ENCODE measurements at regions of chr3 and their contacts with region 1.

Region 1: DNA sequence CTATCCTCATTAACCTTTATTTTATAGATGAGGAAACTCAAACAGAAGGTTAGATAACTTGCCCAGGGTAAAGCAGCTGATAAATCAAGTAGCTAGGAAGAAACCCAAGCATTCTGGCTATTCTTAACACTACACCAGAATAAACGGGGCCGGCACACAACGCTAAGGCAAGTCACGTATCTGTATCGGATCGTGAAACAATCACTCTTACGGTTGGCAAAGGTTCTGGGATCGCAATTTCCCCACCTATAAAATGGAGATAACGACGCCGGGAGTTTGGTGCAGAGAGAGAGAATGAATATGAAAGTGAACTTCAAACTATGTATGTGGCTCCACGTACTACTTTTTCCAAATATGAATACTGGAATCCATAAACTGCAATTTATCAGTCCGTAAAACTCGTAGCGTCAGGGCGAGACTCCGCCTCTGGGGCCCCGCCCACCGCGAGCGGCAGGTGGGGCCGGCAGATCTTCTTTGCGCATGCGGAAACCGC is 252 bp upstream of the ARMC8 start:
- DNase-seq: peak; percentile 91
- H3K4me3 Mint-ChIP-seq: peak overlapping the region; percentile 95
- H3K27ac Mint-ChIP-seq: peak overlapping the region; percentile 92
- H3K4me1 Mint-ChIP-seq: peaks cover 27% of the 10 kb centered on the region
- H3K27me3 Mint-ChIP-seq: peaks cover 1% of the 10 kb centered on the region

Region 2: DNA sequence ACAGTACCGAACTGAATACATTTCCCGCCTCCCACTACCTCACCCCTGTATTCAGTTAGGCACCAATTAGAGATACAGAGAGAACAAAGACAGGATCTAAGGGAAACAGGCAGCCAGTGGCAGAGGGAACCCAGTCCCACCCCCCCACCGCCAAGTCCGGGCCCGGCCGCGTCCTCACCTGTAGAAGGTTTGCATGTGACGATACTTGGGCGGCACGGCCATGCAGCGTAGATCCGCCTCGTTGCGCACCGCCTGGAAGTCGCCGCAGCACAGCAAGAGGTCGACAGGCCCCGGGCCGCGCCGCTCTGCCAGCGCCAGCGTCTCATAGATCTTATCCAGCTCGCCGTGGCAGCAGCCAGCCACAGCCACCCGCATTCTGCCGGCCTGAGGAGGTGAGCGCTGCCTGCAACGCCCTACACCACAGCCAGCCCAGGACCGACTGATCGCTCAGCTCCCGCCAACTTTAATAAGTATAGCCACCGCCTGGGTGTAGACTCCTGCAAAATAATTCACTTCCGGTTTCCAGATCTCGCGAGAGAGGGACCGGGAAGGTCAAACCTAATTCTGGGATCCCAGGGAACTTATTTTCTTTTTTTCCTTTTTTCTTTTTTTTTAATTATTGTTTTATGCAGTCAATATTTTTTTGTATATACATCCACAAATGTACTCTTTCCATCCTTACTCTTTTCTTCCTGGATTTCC is 12.3 kb before region 1 on chr3 and contains the start of gene DBR1:
- CTCF ChIA-PET with region 1: interaction called, 12 read pairs
- intact Hi-C with region 1: loop called (anchors 1 kb)
- DNase-seq: peak; percentile 89
- H3K4me3 Mint-ChIP-seq: peak within 1 kb of the TSS; percentile 97
- H3K27ac Mint-ChIP-seq: peak within 1 kb of the TSS; percentile 97
- H3K4me1 Mint-ChIP-seq: peaks cover 37% of the 10 kb centered on the region
- H3K27me3 Mint-ChIP-seq: no peaks in the 10 kb centered on the region
- total RNA-seq, gene DBR1: 20.0 to 22.3 TPM

Region 3: DNA sequence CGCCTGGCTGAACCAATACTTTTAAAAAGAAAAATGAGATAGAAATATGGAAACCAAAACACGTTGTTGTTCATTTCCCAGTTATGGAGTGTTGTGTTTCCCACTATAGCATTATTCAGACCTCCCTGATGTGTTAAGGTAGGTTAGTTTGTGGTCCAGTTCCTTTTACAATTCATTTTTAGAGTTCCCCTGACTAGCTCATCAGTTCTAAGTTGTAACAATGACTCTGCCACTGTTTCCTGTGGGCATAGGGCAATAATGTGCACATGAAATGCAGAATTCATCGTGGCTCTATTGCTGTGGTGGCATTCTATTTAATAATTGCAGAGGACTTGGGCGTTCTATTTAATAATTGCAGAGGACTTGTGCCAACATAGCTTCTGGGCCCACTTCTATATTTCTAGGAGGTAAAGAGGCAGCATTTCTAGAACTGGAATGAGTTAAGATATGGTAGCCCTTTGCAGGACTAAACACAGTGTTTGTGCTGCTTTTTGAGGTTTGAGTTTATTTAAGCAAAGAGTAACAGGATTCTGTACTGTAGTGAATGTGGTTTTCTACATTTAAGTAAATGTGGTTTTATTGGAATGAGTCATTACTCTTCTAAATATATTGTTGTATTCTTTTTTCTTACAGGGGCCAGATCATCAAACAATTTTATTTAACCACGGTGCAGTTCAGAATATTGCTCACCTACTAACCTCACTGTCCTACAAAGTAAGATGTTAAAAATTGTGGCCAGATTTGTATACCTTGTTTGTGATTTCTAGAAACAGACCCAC is 47.7 kb after region 1 on chr3:
- CTCF ChIA-PET with region 1: no interaction called
- intact Hi-C with region 1: loop called (anchors 2 kb)
- DNase-seq: no peak
- H3K4me3 Mint-ChIP-seq: no peak overlapping the region
- H3K27ac Mint-ChIP-seq: no peak overlapping the region
- H3K4me1 Mint-ChIP-seq: peaks cover 25% of the 10 kb centered on the region
- H3K27me3 Mint-ChIP-seq: no peaks in the 10 kb centered on the region

Region 4: DNA sequence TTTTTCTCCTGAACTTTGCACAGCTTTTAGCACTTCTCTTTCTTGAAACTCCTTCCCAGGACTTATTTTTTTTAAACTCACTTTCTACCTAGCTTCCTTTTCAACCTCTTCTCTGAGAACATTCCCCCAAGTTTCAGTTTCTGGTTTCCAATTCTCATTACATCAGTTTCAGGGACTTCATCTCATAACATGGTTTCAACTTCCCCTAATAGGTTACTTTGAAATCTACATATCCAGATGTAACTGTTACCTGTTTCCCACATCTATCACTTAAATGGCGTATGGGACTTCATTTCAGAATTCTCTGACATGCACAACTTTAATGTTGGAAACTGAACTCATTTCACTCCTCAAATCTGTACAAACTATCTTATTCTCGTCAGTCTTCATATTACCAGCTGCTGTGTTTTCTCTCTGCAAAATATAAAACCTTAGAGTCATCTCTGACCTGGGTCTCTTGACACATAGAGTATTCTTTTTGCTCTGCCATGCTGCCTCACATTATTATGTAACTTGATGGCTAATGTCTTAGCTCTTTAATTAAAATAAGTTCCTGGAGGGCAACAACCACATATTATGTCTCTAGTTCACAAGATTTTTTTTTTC is 84.4 kb after region 1 on chr3:
- CTCF ChIA-PET with region 1: interaction called, 4 read pairs
- intact Hi-C with region 1: loop called (anchors 1 kb)
- DNase-seq: no peak
- H3K4me3 Mint-ChIP-seq: no peak overlapping the region
- H3K27ac Mint-ChIP-seq: peak overlapping the region; percentile 67
- H3K4me1 Mint-ChIP-seq: peaks cover 11% of the 10 kb centered on the region
- H3K27me3 Mint-ChIP-seq: no peaks in the 10 kb centered on the region

Region 5: DNA sequence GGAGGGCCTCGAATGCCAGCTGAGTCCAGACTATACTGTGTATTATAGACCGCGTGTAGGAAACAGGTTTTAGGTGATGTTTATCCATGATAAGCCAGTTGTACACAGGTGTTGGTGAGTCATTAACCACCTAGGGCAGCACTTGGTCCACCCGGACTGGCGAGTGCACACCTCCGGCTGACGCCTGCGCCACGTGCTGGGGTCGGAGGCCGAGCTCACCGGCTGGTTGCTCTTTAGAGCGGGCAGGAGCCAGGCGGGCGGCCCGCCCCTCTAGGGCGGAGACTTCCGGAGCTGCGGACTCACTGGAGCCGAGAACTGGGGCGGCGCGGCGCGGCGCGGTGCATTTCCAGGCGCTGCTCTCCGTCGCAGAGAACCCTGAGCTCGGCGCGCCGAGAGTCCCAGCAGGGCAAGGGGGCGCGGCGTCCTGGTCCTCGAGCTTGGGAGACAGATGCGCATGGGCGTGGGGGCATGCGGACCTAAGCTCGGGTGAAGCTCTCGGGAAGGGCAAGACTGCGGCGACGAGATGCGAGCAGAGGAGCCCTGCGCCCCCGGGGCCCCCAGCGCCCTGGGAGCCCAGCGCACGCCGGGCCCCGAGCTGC is 247.5 kb after region 1 on chr3 and contains the start of gene ESYT3:
- CTCF ChIA-PET with region 1: interaction called, 3 read pairs
- intact Hi-C with region 1: loop called (anchors 2 kb)
- DNase-seq: peak; percentile 82
- H3K4me3 Mint-ChIP-seq: peak within 1 kb of the TSS; percentile 75
- H3K27ac Mint-ChIP-seq: no peak within 1 kb of the TSS
- H3K4me1 Mint-ChIP-seq: peaks cover 11% of the 10 kb centered on the region
- H3K27me3 Mint-ChIP-seq: peaks cover 55% of the 10 kb centered on the region
- total RNA-seq, gene ESYT3: 0.96 to 1.1 TPM

Region 6: DNA sequence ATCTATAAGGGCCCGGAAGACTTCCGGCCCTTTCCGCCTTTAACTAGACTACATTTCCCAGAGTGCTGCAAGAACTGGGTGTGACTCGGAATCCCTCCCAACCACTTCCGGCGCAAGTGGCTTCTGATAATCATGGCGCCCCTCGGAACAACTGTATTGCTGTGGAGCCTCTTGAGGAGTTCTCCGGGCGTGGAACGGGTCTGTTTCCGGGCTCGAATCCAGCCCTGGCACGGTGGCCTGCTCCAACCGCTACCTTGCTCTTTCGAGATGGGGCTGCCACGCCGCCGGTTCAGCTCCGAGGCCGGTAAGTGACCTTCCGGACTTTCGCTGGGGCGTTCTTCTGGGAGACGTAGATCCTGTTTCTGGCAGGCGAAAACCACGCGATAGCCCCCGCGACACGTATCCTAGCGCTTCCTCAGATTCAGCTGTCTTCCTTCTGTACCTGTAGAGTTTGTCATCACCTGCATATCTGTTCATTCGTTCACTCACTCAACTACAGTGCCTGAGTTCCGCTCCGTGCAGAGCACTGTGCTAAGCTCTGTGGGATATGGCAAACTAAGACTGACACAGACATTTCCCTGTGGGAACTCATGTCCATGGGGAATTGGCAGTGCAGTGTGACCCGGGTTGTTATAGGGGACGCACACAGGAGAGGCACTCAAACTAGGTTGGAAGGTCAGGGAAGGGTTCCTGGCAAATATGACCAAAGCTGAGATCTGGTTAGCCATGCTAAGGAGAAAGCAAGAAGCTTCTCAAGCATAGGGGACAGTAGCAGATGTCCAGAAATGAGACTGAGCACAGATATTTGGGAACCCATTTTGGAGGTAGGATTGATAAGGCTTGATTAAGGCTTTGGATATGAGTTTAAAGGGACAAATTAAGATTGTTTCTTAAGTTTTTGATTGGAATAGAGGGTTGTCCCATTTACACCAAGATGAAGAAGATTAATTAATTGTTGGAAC is 1157.3 kb after region 1 on chr3 and contains the start of gene MRPS22:
- CTCF ChIA-PET with region 1: no interaction called
- intact Hi-C with region 1: loop called (anchors 5 kb)
- DNase-seq: peak; percentile 89
- H3K4me3 Mint-ChIP-seq: no peak within 1 kb of the TSS
- H3K27ac Mint-ChIP-seq: no peak within 1 kb of the TSS
- H3K4me1 Mint-ChIP-seq: peaks cover 9% of the 10 kb centered on the region
- H3K27me3 Mint-ChIP-seq: peaks cover 3% of the 10 kb centered on the region
- total RNA-seq, gene MRPS22: 66.8 to 69.1 TPM